Mammary epithelial cell (primary cell): ENCODE measurements at regions of chr4 and their contacts with region 1.

Region 1: GRCh38 chr4:37452952-37453280 is 208.4 kb downstream of the NWD2 start:
- DNase-seq: peak; percentile 64
- H3K4me3 ChIP-seq: no peak overlapping the region
- H3K27ac ChIP-seq: no peak overlapping the region
- H3K4me1 ChIP-seq: peaks cover 9% of the 10 kb centered on the region
- H3K27me3 ChIP-seq: peaks cover 18% of the 10 kb centered on the region
- CTCF ChIP-seq: peak; percentile 60 to 80

Region 2: GRCh38 chr4:37528166-37528885 is 75.4 kb after region 1 on chr4:
- CTCF ChIA-PET with region 1: no interaction called
- dilution Hi-C with region 1: no loop called
- in situ Hi-C with region 1: no loop called
- intact Hi-C with region 1: loop called (anchors 2 kb)
- DNase-seq: peak; percentile 48
- H3K4me3 ChIP-seq: no peak overlapping the region
- H3K27ac ChIP-seq: no peak overlapping the region
- H3K4me1 ChIP-seq: no peaks in the 10 kb centered on the region
- H3K27me3 ChIP-seq: no peaks in the 10 kb centered on the region
- CTCF ChIP-seq: peak in 1 of 2 donors; percentile 1

Region 3: GRCh38 chr4:37561803-37562207 is 108.9 kb after region 1 on chr4:
- CTCF ChIA-PET with region 1: interaction called, 4 read pairs
- dilution Hi-C with region 1: no loop called
- in situ Hi-C with region 1: loop called in 1 of 2 experiments (anchors 10 kb)
- intact Hi-C with region 1: loop called (anchors 1 kb)
- DNase-seq: peak; percentile 72
- H3K4me3 ChIP-seq: no peak overlapping the region
- H3K27ac ChIP-seq: no peak overlapping the region
- H3K4me1 ChIP-seq: no peaks in the 10 kb centered on the region
- H3K27me3 ChIP-seq: no peaks in the 10 kb centered on the region
- CTCF ChIP-seq: no peak

Region 4: DNA sequence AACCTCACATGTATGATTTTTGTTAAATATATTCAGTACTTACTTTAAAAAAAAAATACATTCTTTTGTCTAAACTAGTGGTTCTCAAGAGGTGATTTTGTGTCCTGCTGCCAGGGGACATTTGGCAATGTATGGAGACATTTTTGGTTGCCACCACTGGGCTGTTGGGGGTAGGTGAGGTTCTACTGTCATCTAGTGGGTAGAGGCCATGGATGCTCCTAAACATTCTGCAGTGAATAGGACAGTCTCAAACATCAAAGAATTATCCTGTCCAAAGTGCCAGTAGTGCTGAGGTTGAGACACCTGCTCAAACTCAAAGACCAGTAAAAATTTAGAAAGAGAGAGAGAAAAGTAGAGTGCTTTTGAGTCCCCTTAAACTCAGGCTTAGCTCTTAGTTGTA is 340.6 kb after region 1 on chr4:
- CTCF ChIA-PET with region 1: no interaction called
- dilution Hi-C with region 1: no loop called
- in situ Hi-C with region 1: loop called in 1 of 2 experiments (anchors 25 kb)
- intact Hi-C with region 1: loop called (anchors 1 kb)
- DNase-seq: peak; percentile 3
- H3K4me3 ChIP-seq: no peak overlapping the region
- H3K27ac ChIP-seq: no peak overlapping the region
- H3K4me1 ChIP-seq: no peaks in the 10 kb centered on the region
- H3K27me3 ChIP-seq: peaks cover 3% of the 10 kb centered on the region
- CTCF ChIP-seq: peak; percentile 57 to 91